ENCODE measurements at regions of chr14 and their contacts with region 1.

Region 1: DNA sequence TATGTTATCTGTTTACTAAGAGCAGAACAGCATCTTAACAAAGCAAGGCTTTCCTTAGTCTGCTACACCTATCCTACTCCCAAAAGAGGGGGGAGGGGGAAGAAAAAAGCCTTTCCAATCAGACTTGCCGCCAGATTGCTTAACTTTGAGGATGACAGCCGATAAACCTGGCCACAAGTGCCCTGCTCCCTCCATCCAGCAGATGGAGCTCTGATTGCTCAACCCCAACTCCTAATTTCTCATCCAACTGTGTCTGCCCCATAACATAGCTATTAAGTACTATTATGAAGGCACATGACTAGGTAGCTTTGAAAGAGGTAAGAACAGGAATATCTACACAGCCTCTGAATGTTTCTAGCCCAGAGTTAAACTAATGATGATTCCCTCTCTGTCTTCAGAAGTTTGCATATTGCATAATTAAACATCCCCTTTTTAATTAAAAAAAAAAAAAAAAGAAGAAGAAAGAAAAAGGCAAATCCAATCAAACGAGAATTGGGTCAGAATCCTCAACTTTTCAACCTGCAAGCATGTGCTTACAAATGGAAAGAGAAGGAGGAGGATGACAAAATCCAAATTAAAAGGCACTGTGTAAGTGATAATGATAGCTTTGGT is 247.4 kb downstream of the GALC start:
- DNase-seq: peak; percentile 43
- H3K4me3 Mint-ChIP-seq: no peak overlapping the region
- H3K27ac Mint-ChIP-seq: no peak overlapping the region
- H3K4me1 Mint-ChIP-seq: no peaks in the 10 kb centered on the region
- H3K27me3 Mint-ChIP-seq: no peaks in the 10 kb centered on the region

Region 2: GRCh38 chr14:87732562-87732961 is 13.1 kb before region 1 on chr14:
- CTCF ChIA-PET with region 1: interaction called, 12 read pairs
- intact Hi-C with region 1: no loop called
- DNase-seq: no peak
- H3K4me3 Mint-ChIP-seq: no peak overlapping the region
- H3K27ac Mint-ChIP-seq: no peak overlapping the region
- H3K4me1 Mint-ChIP-seq: no peaks in the 10 kb centered on the region
- H3K27me3 Mint-ChIP-seq: no peaks in the 10 kb centered on the region

Region 3: GRCh38 chr14:87896393-87897380 is 151.1 kb after region 1 on chr14:
- CTCF ChIA-PET with region 1: interaction called, 29 read pairs
- intact Hi-C with region 1: loop called (anchors 1 kb)
- DNase-seq: peak; percentile 9
- H3K4me3 Mint-ChIP-seq: no peak overlapping the region
- H3K27ac Mint-ChIP-seq: no peak overlapping the region
- H3K4me1 Mint-ChIP-seq: no peaks in the 10 kb centered on the region
- H3K27me3 Mint-ChIP-seq: no peaks in the 10 kb centered on the region